ENCODE measurements at regions of chr12 and their contacts with region 1.

Region 1: GRCh38 chr12:4538207-4539160 is at the start of gene RAD51AP1:
- DNase-seq: peak; percentile 97
- ATAC-seq: peak; percentile 97
- H3K4me3 Mint-ChIP-seq: peak within 1 kb of the TSS; percentile 91
- H3K27ac Mint-ChIP-seq: peak within 1 kb of the TSS; percentile 96
- H3K4me1 Mint-ChIP-seq: peaks cover 26% of the 10 kb centered on the region
- H3K27me3 Mint-ChIP-seq: no peaks in the 10 kb centered on the region
- total RNA-seq, gene RAD51AP1: 44.6 to 50.9 TPM

Region 2: DNA sequence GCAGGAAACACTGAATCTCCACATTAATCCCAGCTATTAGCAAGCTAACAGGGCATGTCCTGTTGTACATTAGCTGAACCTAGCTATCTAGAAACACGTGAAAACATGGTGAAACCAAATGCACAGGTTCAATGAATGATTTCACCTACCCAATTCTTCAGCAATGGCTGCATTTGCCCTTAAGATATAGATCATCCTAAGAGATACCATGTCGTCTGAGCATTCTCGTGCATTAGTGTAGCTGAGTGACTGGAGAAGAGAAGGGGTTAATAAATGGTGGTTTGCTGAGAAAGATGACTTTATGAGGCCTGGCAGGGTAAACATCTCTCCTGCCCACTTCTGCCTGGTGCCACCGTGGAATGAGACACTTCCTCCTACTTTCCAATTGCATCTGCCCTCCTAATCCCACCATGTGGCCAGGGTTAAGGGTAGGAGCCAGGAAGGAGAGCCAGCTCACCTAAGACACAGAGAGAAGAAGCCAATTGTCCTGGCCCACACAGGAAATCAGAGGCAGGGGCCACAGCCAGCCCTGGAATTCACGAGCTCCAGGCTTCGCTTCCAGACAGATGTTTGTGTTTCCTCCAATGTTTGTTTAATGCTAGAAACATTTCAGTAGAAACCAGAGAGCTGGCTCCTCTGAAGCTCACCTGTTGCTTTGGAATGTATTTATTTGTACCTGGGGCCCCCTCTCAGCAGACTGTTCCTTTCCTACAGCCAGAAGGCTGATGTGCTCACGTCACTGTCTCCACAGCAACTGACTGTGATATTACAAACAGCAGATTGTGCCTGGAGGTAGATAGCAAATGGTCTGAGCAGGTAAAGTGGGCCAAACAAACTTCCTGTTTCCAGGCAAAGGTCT is 539.3 kb before region 1 on chr12:
- CTCF ChIA-PET with region 1: no interaction called
- POLR2A ChIA-PET with region 1: no interaction called
- intact Hi-C with region 1: loop called in 1 of 2 experiments (anchors 5 kb)
- DNase-seq: no peak
- ATAC-seq: no peak
- H3K4me3 Mint-ChIP-seq: no peak overlapping the region
- H3K27ac Mint-ChIP-seq: no peak overlapping the region
- H3K4me1 Mint-ChIP-seq: peaks cover 16% of the 10 kb centered on the region
- H3K27me3 Mint-ChIP-seq: no peaks in the 10 kb centered on the region

Region 3: DNA sequence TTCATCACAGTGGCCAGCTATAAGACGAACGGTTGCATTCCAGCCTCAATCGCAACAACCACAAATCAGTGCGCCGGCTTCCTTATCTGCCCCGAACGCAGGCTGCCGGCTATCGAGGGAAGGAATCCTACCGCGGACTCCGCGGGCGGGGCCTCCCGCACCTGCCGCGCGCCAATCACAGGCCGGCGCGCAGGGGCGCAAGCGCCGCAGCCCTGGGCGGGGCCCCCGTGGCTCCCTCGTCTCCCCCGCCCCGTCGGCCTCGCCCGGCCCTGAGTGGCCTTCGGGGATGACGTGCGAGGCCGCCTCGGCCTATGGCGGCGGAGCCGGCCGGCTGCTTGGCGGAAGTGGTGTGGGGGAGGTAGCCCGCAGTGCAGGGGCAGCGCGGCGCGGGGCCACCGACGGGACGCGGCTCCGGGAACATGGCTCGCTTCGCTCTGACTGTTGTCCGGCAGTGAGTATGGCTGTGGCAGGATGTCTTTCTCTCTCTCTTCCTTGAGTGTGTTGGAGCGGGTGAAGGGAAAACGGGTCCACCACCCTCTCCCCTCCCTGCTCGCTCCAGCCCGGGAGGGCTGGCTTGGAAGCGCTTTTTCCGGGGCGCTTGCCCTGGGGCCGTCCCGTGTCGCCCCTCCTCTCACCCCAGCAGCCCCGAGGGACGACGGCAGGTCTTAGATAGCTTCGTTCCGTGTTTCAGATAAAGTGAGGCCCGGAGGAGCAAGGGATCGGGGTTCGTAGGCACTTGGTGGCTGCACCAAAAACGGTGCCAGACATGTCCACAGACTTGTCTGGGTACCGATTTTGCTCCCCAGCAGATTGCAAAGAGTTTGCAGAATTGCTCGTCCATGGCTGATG is 217.4 kb before region 1 on chr12 and contains the start of gene TIGAR:
- CTCF ChIA-PET with region 1: no interaction called
- POLR2A ChIA-PET with region 1: interaction called, 5 read pairs
- intact Hi-C with region 1: loop called (anchors 1 kb)
- DNase-seq: peak; percentile 96
- ATAC-seq: peak; percentile 99
- H3K4me3 Mint-ChIP-seq: peak within 1 kb of the TSS; percentile 89
- H3K27ac Mint-ChIP-seq: peak within 1 kb of the TSS; percentile 85
- H3K4me1 Mint-ChIP-seq: peaks cover 33% of the 10 kb centered on the region
- H3K27me3 Mint-ChIP-seq: no peaks in the 10 kb centered on the region
- total RNA-seq, gene TIGAR: 7.1 to 8.4 TPM

Region 4: DNA sequence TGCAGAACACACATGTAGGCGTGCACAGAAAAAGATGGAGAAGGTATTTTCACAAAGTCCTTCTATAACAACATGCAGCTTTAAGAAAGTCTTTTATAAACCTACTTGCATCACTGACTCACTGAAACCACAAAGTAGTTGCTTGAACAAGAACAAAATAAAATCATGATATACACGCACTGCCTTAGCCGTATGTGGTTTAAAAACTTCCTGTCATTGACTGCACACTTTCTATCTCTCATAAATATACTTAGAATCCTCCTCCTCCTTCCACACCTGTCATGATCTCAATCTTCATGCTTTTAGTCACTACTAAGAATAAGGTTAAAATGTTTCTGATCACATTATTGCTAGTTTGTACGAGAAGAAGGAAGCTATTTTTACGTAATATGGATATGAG is 31.6 kb before region 1 on chr12:
- CTCF ChIA-PET with region 1: no interaction called
- POLR2A ChIA-PET with region 1: no interaction called
- intact Hi-C with region 1: loop called (anchors 1 kb)
- DNase-seq: peak; percentile 21
- ATAC-seq: peak; percentile 99
- H3K4me3 Mint-ChIP-seq: peak overlapping the region; percentile 41
- H3K27ac Mint-ChIP-seq: peak overlapping the region; percentile 69
- H3K4me1 Mint-ChIP-seq: peaks cover 29% of the 10 kb centered on the region
- H3K27me3 Mint-ChIP-seq: no peaks in the 10 kb centered on the region

Region 5: DNA sequence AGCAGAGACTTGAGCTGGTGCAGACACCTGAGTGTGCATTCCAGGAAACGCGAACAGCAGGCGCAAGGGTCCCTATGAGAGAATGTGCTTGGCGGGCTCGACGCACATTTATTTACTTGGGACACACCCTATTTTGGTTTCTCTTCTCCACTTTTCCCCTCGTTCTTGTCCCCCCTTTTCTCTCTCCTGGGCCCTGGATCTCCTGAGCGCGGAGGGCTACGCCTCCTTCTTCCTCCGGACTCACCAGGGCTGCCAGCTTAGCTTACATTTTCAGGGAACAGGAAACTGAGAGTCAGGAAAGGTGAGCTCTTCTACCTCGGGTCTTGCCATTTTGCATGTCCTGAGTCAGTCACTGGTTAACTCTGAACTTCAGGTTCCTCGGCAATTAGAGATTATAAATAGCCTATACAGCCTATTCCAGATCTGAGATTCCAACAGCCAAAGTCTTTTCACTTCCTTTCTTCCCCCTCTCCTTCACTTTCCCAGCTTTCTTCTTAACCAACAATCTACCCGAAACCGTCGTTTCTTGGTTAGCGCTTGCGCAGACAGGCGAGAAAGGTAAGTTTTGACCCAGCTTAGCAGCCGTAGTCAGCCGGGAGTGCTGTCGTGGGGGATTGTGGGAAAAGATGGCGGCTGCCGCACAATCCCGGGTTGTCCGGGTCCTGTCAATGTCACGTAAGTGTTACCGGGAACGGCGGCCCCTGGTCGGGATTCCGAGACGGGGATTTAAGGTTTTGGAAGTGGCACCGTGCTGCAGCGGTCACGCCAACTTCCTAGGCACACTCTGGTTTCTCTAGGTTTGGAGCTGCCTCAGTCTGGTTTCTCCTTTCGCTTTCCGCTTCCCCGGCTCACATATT is 110.2 kb after region 1 on chr12 and contains the starts of genes AKAP3 and NDUFA9:
- CTCF ChIA-PET with region 1: no interaction called
- POLR2A ChIA-PET with region 1: interaction called, 6 read pairs
- intact Hi-C with region 1: loop called in 1 of 2 experiments (anchors 1 kb)
- DNase-seq: peak; percentile 90
- ATAC-seq: peak; percentile 95
- H3K4me3 Mint-ChIP-seq: peak within 1 kb of the TSS; percentile 98
- H3K27ac Mint-ChIP-seq: peak within 1 kb of the TSS; percentile 91
- H3K4me1 Mint-ChIP-seq: peaks cover 48% of the 10 kb centered on the region
- H3K27me3 Mint-ChIP-seq: no peaks in the 10 kb centered on the region
- total RNA-seq, gene AKAP3: 1.3 to 2.8 TPM
- total RNA-seq, gene NDUFA9: 93.3 to 132 TPM

Region 6: GRCh38 chr12:4679711-4680110 is 141.2 kb after region 1 on chr12:
- CTCF ChIA-PET with region 1: no interaction called
- POLR2A ChIA-PET with region 1: no interaction called
- intact Hi-C with region 1: no loop called
- DNase-seq: no peak
- ATAC-seq: no peak
- H3K4me3 Mint-ChIP-seq: no peak overlapping the region
- H3K27ac Mint-ChIP-seq: no peak overlapping the region
- H3K4me1 Mint-ChIP-seq: peaks cover under 1% of the 10 kb centered on the region
- H3K27me3 Mint-ChIP-seq: no peaks in the 10 kb centered on the region

Measured in activated CD4-positive, alpha-beta T cell treated with anti-CD3 and anti-CD28 coated beads for 36 hours (primary cell).